K562 (cell line): ENCODE measurements at regions of chr2 and their contacts with region 1.

Region 1: GRCh38 chr2:190679813-190680591 is 31.1 kb downstream of the NAB1 start:
- DNase-seq: peak; percentile 27 to 70 (median 40)
- ATAC-seq: peak; percentile 97
- H3K4me3 ChIP-seq: no peak overlapping the region
- H3K27ac ChIP-seq: no peak overlapping the region
- H3K4me1 ChIP-seq: peaks cover 0 to 10% of the 10 kb centered on the region in 2 experiments; a peak in 2 of 5 replicates
- H3K27me3 ChIP-seq: no peaks in the 10 kb centered on the region
- CTCF ChIP-seq: peak; percentile 62 to 71 (median 65)
- EP300 ChIP-seq: no peak
- POLR2A ChIP-seq: no peak
- RAD21 ChIP-seq: peak; percentile 45 to 70

Region 2: DNA sequence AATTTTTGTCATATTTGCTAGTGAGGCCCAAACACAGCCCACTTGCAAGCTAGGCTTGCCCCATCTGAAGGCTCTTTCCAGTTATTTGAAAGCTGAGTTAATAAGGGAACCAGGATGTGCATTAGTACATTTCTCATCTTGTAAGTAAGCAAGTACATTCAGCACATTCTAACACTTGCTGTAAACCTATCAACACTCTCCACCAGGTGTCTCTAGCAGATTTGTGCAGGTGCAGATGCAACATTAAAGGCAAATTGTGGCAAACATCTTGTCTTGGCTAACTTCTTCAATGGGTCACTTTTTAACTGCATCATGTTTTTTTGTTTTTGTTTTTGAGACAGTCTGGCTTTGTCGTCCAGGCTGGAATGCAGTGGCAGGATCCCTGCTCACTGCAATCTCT is 297.2 kb before region 1 on chr2:
- CTCF ChIA-PET with region 1: no interaction called
- POLR2A ChIA-PET with region 1: interaction called, 3 read pairs
- in situ Hi-C with region 1: no loop called
- intact Hi-C with region 1: loop called (anchors 5 kb)
- DNase-seq: peak; percentile 23 to 63 (median 31)
- ATAC-seq: peak; percentile 43
- H3K4me3 ChIP-seq: no peak overlapping the region
- H3K27ac ChIP-seq: no peak overlapping the region
- H3K4me1 ChIP-seq: peaks cover 5 to 33% of the 10 kb centered on the region in 2 experiments; a peak in 4 of 5 replicates
- H3K27me3 ChIP-seq: no peaks in the 10 kb centered on the region
- CTCF ChIP-seq: peak; percentile 41 to 66 (median 56); a peak in 5 of 6 replicates
- EP300 ChIP-seq: no peak
- POLR2A ChIP-seq: no peak
- RAD21 ChIP-seq: peak; percentile 46 to 89; a peak in 3 of 4 replicates

Region 3: DNA sequence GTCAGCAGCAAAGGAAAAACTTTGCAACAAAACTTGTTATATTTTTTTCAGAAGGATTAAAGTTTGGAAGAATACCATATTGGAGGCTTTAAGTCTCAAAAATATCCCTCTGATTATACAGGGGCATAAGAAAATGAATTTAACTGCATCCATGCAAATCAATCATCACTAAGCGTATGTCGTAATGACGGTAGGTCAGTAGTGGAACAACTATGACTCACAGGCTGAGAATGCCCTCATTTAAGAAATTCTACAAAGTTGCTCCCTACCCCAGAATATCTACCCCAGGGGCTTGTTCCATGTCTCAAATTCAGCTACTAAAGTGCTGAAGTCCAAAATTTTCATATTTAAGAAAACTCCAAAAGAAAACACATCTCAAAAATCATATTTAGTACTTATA is 43.6 kb before region 1 on chr2:
- CTCF ChIA-PET with region 1: no interaction called
- POLR2A ChIA-PET with region 1: no interaction called
- in situ Hi-C with region 1: no loop called
- intact Hi-C with region 1: loop called (anchors 1 kb)
- DNase-seq: peak in 1 of 4 experiments; percentile 12
- ATAC-seq: 0 out of 3 replicates have a peak, but pooled peaks have one; percentile 19
- H3K4me3 ChIP-seq: no peak overlapping the region
- H3K27ac ChIP-seq: no peak overlapping the region
- H3K4me1 ChIP-seq: peaks cover 0 to 2% of the 10 kb centered on the region in 2 experiments; a peak in 2 of 5 replicates
- H3K27me3 ChIP-seq: no peaks in the 10 kb centered on the region
- CTCF ChIP-seq: no peak
- EP300 ChIP-seq: no peak
- POLR2A ChIP-seq: no peak
- RAD21 ChIP-seq: no peak